Common myeloid progenitor, CD34-positive (primary cell): ENCODE measurements at regions of chr12 and their contacts with region 1.

Region 1: DNA sequence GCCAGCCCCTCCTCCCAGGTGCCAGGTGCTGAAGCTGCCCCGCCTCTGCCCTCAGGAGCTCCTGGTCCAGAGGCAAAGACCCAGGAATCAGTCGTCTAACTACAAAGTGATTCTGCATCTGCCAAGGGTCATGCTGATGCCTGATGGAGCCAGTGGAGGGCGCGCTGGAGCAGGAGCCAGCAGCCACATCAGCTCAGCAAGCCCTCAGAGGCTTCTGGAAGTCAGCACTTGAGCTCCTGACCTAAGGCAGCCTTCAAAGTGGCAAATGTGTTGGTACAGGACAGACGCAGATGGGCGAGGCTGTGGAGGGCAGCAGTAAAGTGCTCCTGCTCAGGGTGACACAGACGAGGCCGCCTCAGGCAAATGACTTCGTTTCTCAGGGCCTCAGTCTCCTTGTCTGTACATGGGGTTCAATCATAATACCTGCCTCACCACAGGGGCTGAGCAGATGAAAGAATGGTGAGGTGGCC is 10.9 kb downstream of the C12orf43 start:
- DNase-seq: peak; percentile 34 to 66 (median 65)
- H3K4me3 ChIP-seq: no peak overlapping the region
- H3K27ac ChIP-seq: no peak overlapping the region
- H3K4me1 ChIP-seq: peaks cover 0 to 5% (median 0%) of the 10 kb centered on the region in 4 experiments
- H3K27me3 ChIP-seq: no peaks in the 10 kb centered on the region

Region 2: GRCh38 chr12:121110211-121110940 is 105.0 kb after region 1 on chr12:
- CTCF ChIA-PET with region 1: interaction called, 34 read pairs
- POLR2A ChIA-PET with region 1: no interaction called
- DNase-seq: peak; percentile 63 to 76 (median 70)
- H3K4me3 ChIP-seq: no peak overlapping the region
- H3K27ac ChIP-seq: no peak overlapping the region
- H3K4me1 ChIP-seq: peaks cover 0 to 15% (median 12%) of the 10 kb centered on the region in 4 experiments
- H3K27me3 ChIP-seq: no peaks in the 10 kb centered on the region